ENCODE measurements at regions of chr6 and their contacts with region 1.

Region 1: GRCh38 chr6:8131256-8131897 is 29.0 kb upstream of the EEF1E1 start:
- DNase-seq: no peak
- H3K4me3 ChIP-seq: no peak overlapping the region
- H3K27me3 ChIP-seq: no peaks in the 10 kb centered on the region
- CTCF ChIP-seq: peak; percentile 66

Region 2: DNA sequence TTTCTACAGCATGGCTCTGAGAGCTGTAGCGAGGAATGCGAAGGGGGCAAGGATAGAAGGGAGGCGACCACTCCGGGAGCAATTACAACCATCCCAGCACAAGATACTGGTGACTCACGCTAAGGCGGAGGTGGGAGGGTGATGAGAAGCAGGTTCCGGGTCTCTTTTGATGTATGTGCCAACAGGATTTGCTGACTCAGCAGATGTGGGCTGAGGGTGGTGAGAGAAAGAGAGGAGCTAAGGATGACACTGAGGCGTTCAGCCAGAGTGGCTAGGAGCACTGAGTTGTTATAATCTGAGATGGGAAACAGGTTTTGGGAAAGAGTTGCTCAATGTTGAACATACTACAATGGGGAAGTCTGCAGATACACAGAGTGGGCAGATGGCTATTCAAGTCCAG is 211.5 kb before region 1 on chr6:
- CTCF ChIA-PET with region 1: no interaction called
- POLR2A ChIA-PET with region 1: no interaction called
- DNase-seq: no peak
- H3K4me3 ChIP-seq: no peak overlapping the region
- H3K27me3 ChIP-seq: peaks cover 2% of the 10 kb centered on the region; the same call in 1 of the 2 replicates
- CTCF ChIP-seq: no peak

Region 3: GRCh38 chr6:8149350-8149749 is 18.0 kb after region 1 on chr6:
- CTCF ChIA-PET with region 1: interaction called, 14 read pairs
- POLR2A ChIA-PET with region 1: no interaction called
- DNase-seq: no peak
- H3K4me3 ChIP-seq: no peak overlapping the region
- H3K27me3 ChIP-seq: 0 out of 2 replicates have a peak, but pooled peaks cover 1% of the 10 kb centered on the region
- CTCF ChIP-seq: no peak

Region 4: GRCh38 chr6:8180327-8181159 is 49.2 kb after region 1 on chr6:
- CTCF ChIA-PET with region 1: interaction called, 11 read pairs
- POLR2A ChIA-PET with region 1: no interaction called
- DNase-seq: peak; percentile 77
- H3K4me3 ChIP-seq: no peak overlapping the region
- H3K27me3 ChIP-seq: no peaks in the 10 kb centered on the region
- CTCF ChIP-seq: no peak

Region 5: DNA sequence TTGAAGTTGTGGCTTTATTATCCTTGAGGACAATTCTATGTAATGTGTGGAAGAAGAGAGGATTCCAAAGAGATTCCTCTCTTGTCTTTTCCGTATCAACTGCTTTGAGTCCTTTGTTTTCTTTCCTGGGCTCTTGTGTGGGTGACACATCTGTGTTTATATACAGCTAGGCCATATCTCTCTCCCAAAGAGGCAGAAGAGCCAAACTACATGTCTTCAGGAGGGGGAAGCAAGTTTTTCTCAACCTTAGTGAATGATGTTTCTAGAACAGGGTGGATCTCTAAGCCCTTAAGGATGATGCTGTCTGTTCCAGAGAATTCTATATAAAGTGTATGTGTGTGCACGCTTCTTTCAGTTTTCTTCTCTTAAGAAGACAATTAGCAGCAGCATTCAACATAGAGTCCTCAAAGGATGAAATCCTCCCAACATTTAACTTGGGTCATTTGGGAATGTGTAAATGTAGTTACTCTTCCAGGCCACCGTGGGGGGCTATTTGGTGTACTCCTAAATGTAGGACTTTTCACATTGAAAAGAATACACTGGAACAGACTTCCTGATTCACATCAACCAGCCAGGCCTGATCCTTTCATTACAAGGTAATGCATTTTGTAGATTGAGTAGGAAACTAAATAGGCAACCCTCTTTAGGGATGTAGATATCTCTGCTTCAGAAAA is 63.8 kb after region 1 on chr6:
- CTCF ChIA-PET with region 1: interaction called, 14 read pairs
- POLR2A ChIA-PET with region 1: no interaction called
- DNase-seq: no peak
- H3K4me3 ChIP-seq: no peak overlapping the region
- H3K27me3 ChIP-seq: no peaks in the 10 kb centered on the region
- CTCF ChIP-seq: 0 out of 2 replicates have a peak, but pooled peaks have one; percentile 3

Region 6: GRCh38 chr6:8219352-8219943 is 88.1 kb after region 1 on chr6:
- CTCF ChIA-PET with region 1: interaction called, 340 read pairs
- POLR2A ChIA-PET with region 1: interaction called, 3 read pairs
- DNase-seq: no peak
- H3K4me3 ChIP-seq: no peak overlapping the region
- H3K27me3 ChIP-seq: no peaks in the 10 kb centered on the region
- CTCF ChIP-seq: peak; percentile 62

Region 7: DNA sequence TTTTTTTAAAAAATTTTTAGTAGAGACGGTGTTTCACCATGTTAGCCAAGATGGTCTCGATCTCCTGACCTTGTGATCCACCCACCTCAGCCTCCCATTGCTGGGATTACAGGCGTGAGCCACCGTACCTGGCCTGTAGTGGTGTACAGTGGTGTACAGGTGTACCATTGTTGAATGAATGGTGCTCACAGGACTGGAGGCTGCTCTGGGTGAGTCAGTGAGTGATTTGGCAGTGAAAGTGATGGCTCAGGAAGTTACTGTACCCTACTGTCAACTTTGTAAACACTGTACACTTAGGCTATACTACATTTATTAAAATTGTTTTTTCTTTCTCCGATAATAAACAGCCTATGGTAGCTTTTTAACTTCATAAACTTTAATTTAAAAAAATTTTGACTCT is 93.7 kb after region 1 on chr6:
- CTCF ChIA-PET with region 1: interaction called, 340 read pairs
- POLR2A ChIA-PET with region 1: no interaction called
- DNase-seq: no peak
- H3K4me3 ChIP-seq: no peak overlapping the region
- H3K27me3 ChIP-seq: no peaks in the 10 kb centered on the region
- CTCF ChIP-seq: no peak

Region 8: GRCh38 chr6:8243475-8243874 is 112.1 kb after region 1 on chr6:
- CTCF ChIA-PET with region 1: interaction called, 10 read pairs
- POLR2A ChIA-PET with region 1: no interaction called
- DNase-seq: no peak
- H3K4me3 ChIP-seq: no peak overlapping the region
- H3K27me3 ChIP-seq: no peaks in the 10 kb centered on the region
- CTCF ChIP-seq: no peak

Measured in BJ (cell line).